Heart left ventricle (tissue), 16 donors: ENCODE measurements at regions of chr16 and their contacts with region 1.

Region 1: GRCh38 chr16:2980227-2981086 is at the start of gene PKMYT1:
- DNase-seq: peak; percentile 90 to 96 (median 93)
- ATAC-seq: peak; percentile 59 to 96 (median 94)
- H3K4me3 ChIP-seq: peak within 1 kb of the TSS; percentile 58 to 93 (median 78)
- H3K27ac ChIP-seq: peak within 1 kb of the TSS; percentile 63 to 95 (median 85)
- H3K4me1 ChIP-seq: peaks cover 0 to 37% (median 28%) of the 10 kb centered on the region in 12 donors
- H3K27me3 ChIP-seq: peaks cover 0 to 12% (median 4%) of the 10 kb centered on the region in 9 donors
- CTCF ChIP-seq: peak in 1 of 12 donors; percentile 7
- POLR2A ChIP-seq: peak; percentile 65 to 98
- total RNA-seq, gene PKMYT1: 0.72 to 11.9 (median 1.2) TPM

Region 2: DNA sequence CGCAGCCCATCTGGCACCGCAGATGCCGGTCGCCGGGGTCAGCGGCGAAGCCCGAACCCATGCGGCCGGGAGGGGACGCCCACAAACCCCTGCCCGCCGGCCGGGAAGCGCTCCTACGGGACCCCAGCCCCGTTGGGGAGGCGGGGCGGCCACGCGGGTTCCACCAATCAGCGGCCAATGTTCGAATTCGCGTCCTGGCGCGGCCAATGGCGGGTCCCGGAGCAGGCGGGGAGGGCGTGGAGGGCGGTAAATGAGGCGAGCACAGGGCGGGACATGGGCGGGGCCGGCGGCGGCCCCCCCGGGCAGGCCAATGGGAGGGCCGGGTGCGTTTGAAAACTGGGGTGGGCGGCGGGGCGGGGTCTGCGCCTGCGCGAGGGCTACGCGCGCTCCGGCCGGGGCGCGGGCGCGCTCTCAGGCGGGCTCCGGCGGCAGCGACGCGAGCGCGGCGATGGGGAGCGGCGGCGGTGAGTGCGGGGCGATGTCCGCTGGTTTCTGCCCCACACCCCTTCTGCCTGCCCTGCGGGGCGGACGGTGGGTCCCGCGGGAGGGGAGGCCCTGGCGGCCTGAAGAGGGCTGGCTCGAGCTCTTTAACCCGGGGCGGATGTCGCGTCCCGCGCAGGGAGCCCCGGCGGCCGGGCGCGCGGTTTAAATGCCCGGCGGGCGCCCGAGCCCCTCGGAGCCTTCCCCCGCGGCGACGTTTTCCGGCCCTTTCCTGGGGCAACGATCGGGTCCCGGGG is 551.3 kb before region 1 on chr16 and contains the start of gene CCNF:
- intact Hi-C with region 1: no loop called
- DNase-seq: peak; percentile 98 to 99 (median 98)
- ATAC-seq: peak; percentile 98 to 99 (median 99)
- H3K4me3 ChIP-seq: peak within 1 kb of the TSS; percentile 60 to 98 (median 86)
- H3K27ac ChIP-seq: peak within 1 kb of the TSS in 11 of 12 donors; percentile 1 to 81 (median 67)
- H3K4me1 ChIP-seq: peaks cover 0 to 22% (median 14%) of the 10 kb centered on the region in 12 donors
- H3K27me3 ChIP-seq: no peaks in the 10 kb centered on the region
- CTCF ChIP-seq: peak in 5 of 12 donors; percentile 5 to 22 (median 18)
- POLR2A ChIP-seq: peak in 1 of 2 donors; percentile 48
- total RNA-seq, gene CCNF: 0.67 to 6.0 (median 1.6) TPM

Region 3: DNA sequence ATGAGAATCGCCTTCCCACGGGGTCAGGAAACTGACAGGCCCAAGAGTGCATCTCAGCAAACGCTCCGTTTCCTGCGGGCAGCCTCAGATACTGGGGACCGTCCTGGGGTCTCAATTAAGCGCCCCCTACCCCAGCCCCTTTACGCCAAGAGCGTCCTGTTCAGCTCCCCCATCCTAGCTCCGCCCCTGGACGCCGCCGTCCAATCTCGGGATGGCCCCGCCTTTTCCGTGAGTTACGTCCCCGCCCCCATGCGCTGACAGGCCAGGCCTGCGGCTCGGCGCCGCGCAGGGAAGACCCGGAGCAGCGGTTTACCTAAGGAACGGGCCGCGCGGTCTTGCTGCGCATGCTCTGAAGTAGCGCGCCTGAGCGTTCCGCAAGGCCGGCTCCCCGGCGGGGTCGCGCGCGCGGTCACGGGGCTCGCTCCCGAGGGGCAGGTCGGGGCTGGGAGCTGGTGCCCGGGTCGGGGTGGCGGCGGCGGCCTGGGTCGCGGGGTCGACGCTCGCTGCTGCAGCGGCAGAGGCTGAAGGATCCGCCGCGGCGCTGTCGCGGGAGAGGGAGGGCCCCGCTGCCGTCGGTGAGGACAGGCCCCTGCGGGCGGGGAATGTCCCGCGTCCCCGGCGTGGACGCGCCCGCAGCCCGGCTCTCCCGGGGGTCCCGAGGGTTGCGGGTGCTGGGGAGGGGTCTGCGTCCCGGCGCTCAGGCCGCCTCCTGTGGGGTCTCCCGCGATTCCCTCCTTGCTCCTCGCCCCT is 68.7 kb before region 1 on chr16 and contains the start of gene FLYWCH1:
- intact Hi-C with region 1: loop called in 1 of 10 experiments (anchors 5 kb)
- DNase-seq: peak; percentile 98 to 99 (median 99)
- ATAC-seq: peak; percentile 94 to 99 (median 98)
- H3K4me3 ChIP-seq: peak within 1 kb of the TSS; percentile 64 to 97 (median 92)
- H3K27ac ChIP-seq: peak within 1 kb of the TSS; percentile 72 to 95 (median 90)
- H3K4me1 ChIP-seq: peaks cover 0 to 34% (median 14%) of the 10 kb centered on the region in 12 donors
- H3K27me3 ChIP-seq: no peaks in the 10 kb centered on the region
- CTCF ChIP-seq: no peak
- POLR2A ChIP-seq: peak in 1 of 2 donors; percentile 90
- total RNA-seq, gene FLYWCH1: 26.3 to 48.4 (median 34.2) TPM

Region 4: DNA sequence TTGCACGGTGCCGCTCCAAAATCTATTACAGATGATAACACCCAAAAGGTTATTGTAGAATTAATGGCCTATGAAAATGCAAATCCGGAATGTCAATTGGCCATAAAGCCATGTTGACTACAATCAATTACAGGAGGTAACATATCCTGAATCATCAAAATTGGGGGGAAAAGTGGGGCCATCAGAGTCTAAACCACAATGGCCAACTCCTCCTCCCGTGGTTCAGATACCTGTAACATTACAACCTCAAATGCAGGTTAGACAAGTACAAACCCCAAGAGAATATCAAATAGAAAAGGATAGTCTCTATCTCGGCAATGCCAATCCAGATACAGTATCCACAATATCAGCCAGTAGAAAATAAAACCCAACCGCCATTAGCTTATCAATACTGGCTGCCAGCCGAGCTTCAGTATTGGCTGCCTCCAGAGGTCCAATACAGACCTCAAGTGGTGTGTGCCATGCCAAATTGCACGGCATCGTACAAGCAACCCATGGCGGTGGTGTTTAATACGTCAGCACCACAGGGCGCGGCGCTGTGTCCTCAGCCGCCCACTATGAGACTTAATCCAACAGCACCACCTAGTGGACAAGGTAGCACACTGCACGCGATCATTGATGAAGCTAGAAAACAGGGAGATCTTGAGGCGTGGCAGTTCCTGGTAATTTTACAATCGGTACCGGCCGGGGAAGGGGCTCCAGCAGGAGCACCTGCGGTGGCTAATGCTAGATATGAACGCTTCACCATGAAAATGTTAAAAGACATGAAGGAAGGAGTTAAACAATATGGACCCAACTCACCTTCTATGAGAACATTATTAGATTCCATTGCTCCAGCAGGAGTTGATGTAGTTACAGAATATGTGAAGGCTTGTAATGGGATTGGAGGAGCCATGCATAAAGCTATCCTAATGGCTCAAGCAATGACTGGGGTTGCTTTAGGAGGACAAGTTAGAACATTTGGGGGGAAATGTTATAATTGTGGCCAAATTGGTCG is 53.5 kb before region 1 on chr16:
- intact Hi-C with region 1: loop called in 1 of 10 experiments (anchors 2 kb)
- DNase-seq: peak; percentile 77 to 91 (median 86)
- ATAC-seq: peak; percentile 81 to 93 (median 91)
- H3K4me3 ChIP-seq: peak overlapping the region in 8 of 12 donors; percentile 7 to 51 (median 24)
- H3K27ac ChIP-seq: no peak overlapping the region
- H3K4me1 ChIP-seq: peaks cover 0 to 12% (median 3%) of the 10 kb centered on the region in 12 donors
- H3K27me3 ChIP-seq: no peaks in the 10 kb centered on the region
- CTCF ChIP-seq: peak; percentile 86 to 99 (median 96)
- POLR2A ChIP-seq: no peak

Region 5: GRCh38 chr16:3045357-3045728 is 64.9 kb after region 1 on chr16:
- intact Hi-C with region 1: no loop called
- DNase-seq: peak in 1 of 5 donors; percentile 62
- ATAC-seq: peak in 2 of 4 donors; percentile 15 to 23
- H3K4me3 ChIP-seq: peak overlapping the region; percentile 25 to 66 (median 54)
- H3K27ac ChIP-seq: no peak overlapping the region
- H3K4me1 ChIP-seq: peaks cover 4 to 34% (median 16%) of the 10 kb centered on the region in 12 donors
- H3K27me3 ChIP-seq: peaks cover 32 to 96% (median 57%) of the 10 kb centered on the region in 9 donors
- CTCF ChIP-seq: no peak
- POLR2A ChIP-seq: no peak